MCF 10A (cell line): ENCODE measurements at regions of chr1 and their contacts with region 1.

Region 1: DNA sequence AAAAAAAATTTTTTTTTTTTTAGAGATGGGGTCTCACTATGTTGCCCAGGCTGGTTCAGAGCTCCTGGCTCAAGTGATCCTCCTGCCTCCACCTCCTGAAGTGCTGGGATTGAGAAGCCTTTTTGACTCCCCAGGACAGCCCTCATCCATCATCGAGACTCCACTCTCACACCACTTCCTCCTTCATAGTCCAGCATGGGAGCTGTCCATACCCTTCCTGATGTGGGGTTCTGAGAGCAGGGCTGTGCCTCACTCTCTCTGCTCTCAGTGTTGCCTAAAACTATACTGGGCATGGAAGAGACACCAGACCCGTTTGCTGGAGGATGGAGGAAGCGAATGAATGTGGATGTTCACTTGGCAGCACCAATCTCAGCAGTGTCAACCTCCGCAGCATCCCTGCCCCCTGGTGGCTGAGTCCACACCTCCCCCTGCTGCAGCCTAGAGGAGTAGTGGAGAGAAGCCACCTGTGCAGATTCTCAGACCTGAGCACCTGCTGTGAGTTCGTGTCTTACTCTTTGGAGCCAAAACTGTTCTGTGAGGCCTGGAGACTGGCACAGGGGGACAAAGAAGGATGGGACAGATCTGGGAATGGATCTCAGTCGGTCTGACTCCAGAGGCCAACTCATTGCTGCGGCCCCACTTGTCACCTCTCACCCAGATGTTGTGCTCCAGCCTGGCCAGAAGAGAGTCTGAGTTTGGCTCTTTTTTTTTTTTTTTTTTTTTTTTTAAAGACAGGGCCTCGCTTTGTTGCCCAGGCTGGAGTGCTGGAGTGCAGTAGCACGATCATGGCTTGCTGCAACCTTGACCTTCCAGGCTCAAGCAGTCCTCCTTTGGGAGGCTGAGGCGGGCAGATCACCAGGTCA is 17.7 kb downstream of the TINAGL1 start:
- DNase-seq: peak; percentile 81
- H3K4me3 Mint-ChIP-seq: no peak overlapping the region
- H3K27ac Mint-ChIP-seq: no peak overlapping the region
- H3K4me1 Mint-ChIP-seq: peaks cover 11% of the 10 kb centered on the region
- H3K27me3 Mint-ChIP-seq: peaks cover 10% of the 10 kb centered on the region
- CTCF ChIP-seq: peak; percentile 83

Region 2: DNA sequence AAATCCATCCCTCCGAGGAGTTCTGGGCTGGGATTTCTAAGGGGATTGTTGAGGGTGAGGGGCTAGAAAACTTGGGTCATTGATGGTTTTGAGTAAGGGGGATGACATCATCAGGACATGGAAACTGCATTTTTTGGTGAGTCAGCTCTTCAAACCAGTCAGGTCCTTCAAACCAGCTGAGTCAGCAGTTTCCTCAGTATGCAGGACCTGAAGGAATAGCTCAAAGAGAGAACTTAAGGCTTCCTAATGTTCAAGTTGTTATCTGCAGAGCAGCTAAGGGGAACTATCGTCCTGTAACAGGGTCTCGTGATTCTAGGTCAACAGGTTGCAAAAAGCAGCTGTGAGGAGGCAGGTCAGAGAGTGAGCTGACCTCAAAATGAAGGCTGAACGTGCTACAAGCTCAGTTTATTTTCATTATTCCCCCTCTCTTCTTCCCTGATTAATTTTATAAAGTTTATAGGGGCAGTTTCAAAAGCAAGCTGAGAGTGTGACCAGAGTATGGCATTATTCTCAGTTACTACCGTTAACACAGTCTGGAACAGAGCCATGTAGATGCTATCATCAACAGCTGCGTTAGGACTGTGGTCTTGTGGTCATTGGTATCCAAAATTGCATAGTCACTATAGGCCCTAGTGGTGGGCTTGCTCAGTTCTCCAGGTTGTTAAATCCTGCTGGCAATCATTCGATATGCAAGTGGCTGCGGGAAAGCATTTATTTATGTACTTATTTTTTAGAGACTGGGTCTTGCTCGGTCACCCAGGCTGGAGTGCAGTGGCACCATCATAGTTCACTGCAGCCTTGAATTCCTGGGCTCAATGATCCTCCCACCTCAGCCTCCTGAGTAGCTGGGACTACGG is 674.7 kb before region 1 on chr1:
- CTCF ChIA-PET with region 1: no interaction called
- POLR2A ChIA-PET with region 1: no interaction called
- intact Hi-C with region 1: no loop called
- DNase-seq: peak; percentile 62
- H3K4me3 Mint-ChIP-seq: no peak overlapping the region
- H3K27ac Mint-ChIP-seq: no peak overlapping the region
- H3K4me1 Mint-ChIP-seq: no peaks in the 10 kb centered on the region
- H3K27me3 Mint-ChIP-seq: no peaks in the 10 kb centered on the region
- CTCF ChIP-seq: no peak

Region 3: GRCh38 chr1:31460027-31460426 is 134.0 kb before region 1 on chr1:
- CTCF ChIA-PET with region 1: no interaction called
- POLR2A ChIA-PET with region 1: no interaction called
- intact Hi-C with region 1: loop called (anchors 5 kb)
- DNase-seq: no peak
- H3K4me3 Mint-ChIP-seq: no peak overlapping the region
- H3K27ac Mint-ChIP-seq: no peak overlapping the region
- H3K4me1 Mint-ChIP-seq: no peaks in the 10 kb centered on the region
- H3K27me3 Mint-ChIP-seq: peaks cover 20% of the 10 kb centered on the region
- CTCF ChIP-seq: peak; percentile 45

Region 4: GRCh38 chr1:31564134-31564989 is 29.6 kb before region 1 on chr1:
- CTCF ChIA-PET with region 1: interaction called, 36 read pairs
- POLR2A ChIA-PET with region 1: interaction called, 3 read pairs
- intact Hi-C with region 1: loop called (anchors 1 kb)
- DNase-seq: peak; percentile 72
- H3K4me3 Mint-ChIP-seq: no peak overlapping the region
- H3K27ac Mint-ChIP-seq: no peak overlapping the region
- H3K4me1 Mint-ChIP-seq: no peaks in the 10 kb centered on the region
- H3K27me3 Mint-ChIP-seq: no peaks in the 10 kb centered on the region
- CTCF ChIP-seq: peak; percentile 92

Region 5: GRCh38 chr1:31576201-31576669 is 17.8 kb before region 1 on chr1 and contains the start of gene TINAGL1:
- CTCF ChIA-PET with region 1: interaction called, 23 read pairs
- POLR2A ChIA-PET with region 1: interaction called, 4 read pairs
- intact Hi-C with region 1: no loop called
- DNase-seq: peak; percentile 80
- H3K4me3 Mint-ChIP-seq: no peak within 1 kb of the TSS
- H3K27ac Mint-ChIP-seq: no peak within 1 kb of the TSS
- H3K4me1 Mint-ChIP-seq: peaks cover 54% of the 10 kb centered on the region
- H3K27me3 Mint-ChIP-seq: no peaks in the 10 kb centered on the region
- CTCF ChIP-seq: no peak
- total RNA-seq, gene TINAGL1: 2.7 and 2.9 TPM in 2 replicates

Region 6: DNA sequence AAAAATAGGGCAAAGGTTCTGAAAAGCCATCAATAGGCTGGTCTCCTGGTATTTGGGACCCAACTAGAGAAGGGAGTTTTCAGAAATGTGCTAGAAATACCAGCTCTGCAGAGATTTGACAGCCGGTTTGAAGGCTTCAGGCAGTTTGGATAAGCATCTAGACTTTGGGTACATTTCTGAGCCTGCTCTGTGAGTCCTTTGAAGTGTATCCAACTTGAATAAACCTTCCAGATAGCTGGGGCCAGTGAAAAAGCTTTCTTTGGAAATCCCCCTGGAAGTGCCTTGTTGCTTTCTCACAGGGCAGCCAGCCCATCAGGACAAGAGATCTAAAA is 57.1 kb after region 1 on chr1:
- CTCF ChIA-PET with region 1: no interaction called
- POLR2A ChIA-PET with region 1: no interaction called
- intact Hi-C with region 1: no loop called
- DNase-seq: no peak
- H3K4me3 Mint-ChIP-seq: no peak overlapping the region
- H3K27ac Mint-ChIP-seq: no peak overlapping the region
- H3K4me1 Mint-ChIP-seq: no peaks in the 10 kb centered on the region
- H3K27me3 Mint-ChIP-seq: no peaks in the 10 kb centered on the region
- CTCF ChIP-seq: no peak